GM12878 (cell line): ENCODE measurements at regions of chr20 and their contacts with region 1.

Region 1: GRCh38 chr20:11993886-11994461 is 76.3 kb downstream of the BTBD3 start:
- DNase-seq: no peak
- ATAC-seq: peak; percentile 45
- H3K4me3 ChIP-seq: no peak overlapping the region
- H3K27ac ChIP-seq: no peak overlapping the region
- H3K4me1 ChIP-seq: no peaks in the 10 kb centered on the region
- H3K27me3 ChIP-seq: no peaks in the 10 kb centered on the region
- CTCF ChIP-seq: no peak
- EP300 ChIP-seq: no peak
- POLR2A ChIP-seq: no peak
- RAD21 ChIP-seq: no peak

Region 2: GRCh38 chr20:11979306-11979990 is 14.5 kb before region 1 on chr20:
- CTCF ChIA-PET with region 1: interaction called, 4 read pairs
- POLR2A ChIA-PET with region 1: interaction called, 3 read pairs
- RAD21 ChIA-PET with region 1: interaction called, 3 read pairs
- SMC1A ChIA-PET with region 1: interaction called, 21 read pairs
- in situ Hi-C with region 1: no loop called
- intact Hi-C with region 1: no loop called
- DNase-seq: peak; percentile 12
- ATAC-seq: peak; percentile 87
- H3K4me3 ChIP-seq: no peak overlapping the region
- H3K27ac ChIP-seq: no peak overlapping the region
- H3K4me1 ChIP-seq: no peaks in the 10 kb centered on the region
- H3K27me3 ChIP-seq: no peaks in the 10 kb centered on the region
- CTCF ChIP-seq: no peak
- EP300 ChIP-seq: no peak
- POLR2A ChIP-seq: no peak
- RAD21 ChIP-seq: no peak